Psoas muscle (tissue), 8 donors: ENCODE measurements at regions of chr2 and their contacts with region 1.

Region 1: DNA sequence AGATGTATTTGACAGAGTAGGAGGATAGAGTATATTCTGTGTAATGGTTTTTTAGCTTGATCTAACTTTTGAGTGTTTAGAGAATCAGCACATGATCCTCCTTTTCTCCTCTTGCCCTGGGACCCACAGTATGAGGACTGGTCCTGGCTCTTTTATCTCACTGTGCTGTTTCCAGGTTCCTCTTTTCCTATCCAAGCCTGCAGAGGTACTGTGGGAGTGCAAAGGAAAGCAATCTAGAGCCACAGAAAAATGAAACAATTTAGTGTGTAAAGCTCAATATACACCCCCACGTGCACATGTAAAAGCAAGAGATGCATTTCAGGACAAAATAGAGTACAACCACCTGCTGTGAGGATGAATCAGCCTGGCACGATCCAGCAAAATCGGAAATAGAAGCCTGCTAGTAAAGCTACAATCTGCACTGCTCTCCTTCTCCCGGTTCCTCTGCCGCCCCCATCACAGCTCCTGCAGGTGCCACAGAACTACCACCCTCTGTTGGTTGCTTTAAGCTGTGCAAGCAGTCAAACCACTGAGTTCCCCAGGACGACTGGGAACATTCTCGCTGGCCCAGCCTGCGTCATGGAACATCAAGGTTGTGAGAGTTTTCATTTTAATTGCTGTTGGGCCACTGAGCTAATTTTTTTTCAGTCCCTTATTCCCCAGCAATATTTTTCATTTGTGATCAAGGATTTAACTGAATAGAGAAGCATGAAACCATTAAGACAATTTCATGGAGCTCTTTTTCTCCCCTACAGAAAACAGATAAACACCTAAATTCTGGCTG is 47.8 kb upstream of the MAPRE3 start:
- DNase-seq: peak; percentile 34 to 66
- ATAC-seq: peak; percentile 85 to 96 (median 90)
- H3K4me3 ChIP-seq: no peak overlapping the region
- H3K27ac ChIP-seq: no peak overlapping the region
- H3K4me1 ChIP-seq: no peaks in the 10 kb centered on the region
- H3K27me3 ChIP-seq: no peaks in the 10 kb centered on the region
- CTCF ChIP-seq: peak; percentile 64

Region 2: GRCh38 chr2:25606892-25607291 is 1315.7 kb before region 1 on chr2:
- intact Hi-C with region 1: no loop called
- DNase-seq: no peak
- ATAC-seq: peak in 1 of 4 donors; percentile 59
- H3K4me3 ChIP-seq: no peak overlapping the region
- H3K27ac ChIP-seq: no peak overlapping the region
- H3K4me1 ChIP-seq: no peaks in the 10 kb centered on the region
- H3K27me3 ChIP-seq: no peaks in the 10 kb centered on the region
- CTCF ChIP-seq: peak; percentile 65

Region 3: DNA sequence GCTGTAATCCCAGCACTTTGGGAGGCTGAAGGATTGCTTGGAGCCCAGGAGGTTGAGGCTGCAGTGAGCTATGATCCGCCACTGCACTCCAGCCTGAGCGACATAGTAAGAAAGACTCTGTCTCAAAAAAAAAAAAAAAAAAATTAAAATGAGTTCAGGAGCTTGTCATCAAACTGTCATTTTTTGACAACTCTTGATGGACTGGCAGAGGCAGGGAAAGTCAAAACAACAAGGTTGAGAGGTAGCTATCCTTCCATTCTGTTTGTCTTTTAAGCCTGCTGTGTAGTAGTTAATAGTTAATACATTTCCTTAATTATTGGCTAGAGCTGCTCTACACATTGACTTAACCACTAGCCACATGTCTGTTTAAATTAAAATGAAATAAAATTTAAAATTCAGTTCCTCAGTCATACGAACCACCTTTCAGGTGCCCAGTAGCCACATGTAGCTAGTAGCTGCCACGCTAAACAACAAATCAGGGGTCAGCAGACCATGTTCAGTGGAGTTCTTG is 52.0 kb before region 1 on chr2:
- intact Hi-C with region 1: no loop called
- DNase-seq: no peak
- ATAC-seq: no peak
- H3K4me3 ChIP-seq: no peak overlapping the region
- H3K27ac ChIP-seq: no peak overlapping the region
- H3K4me1 ChIP-seq: no peaks in the 10 kb centered on the region
- H3K27me3 ChIP-seq: no peaks in the 10 kb centered on the region
- CTCF ChIP-seq: no peak

Region 4: GRCh38 chr2:28689776-28690175 is 1767.2 kb after region 1 on chr2:
- intact Hi-C with region 1: loop called in 1 of 2 experiments (anchors 5 kb)
- DNase-seq: no peak
- ATAC-seq: no peak
- H3K4me3 ChIP-seq: no peak overlapping the region
- H3K27ac ChIP-seq: no peak overlapping the region
- H3K4me1 ChIP-seq: peaks cover 10% of the 10 kb centered on the region
- H3K27me3 ChIP-seq: no peaks in the 10 kb centered on the region
- CTCF ChIP-seq: no peak